ENCODE measurements at regions of chr2 and their contacts with region 1.

Region 1: GRCh38 chr2:17672583-17673317 is 80.9 kb downstream of the SMC6 start:
- DNase-seq: peak; percentile 33
- H3K27ac ChIP-seq: no peak overlapping the region
- CTCF ChIP-seq: no peak

Region 2: GRCh38 chr2:16756831-16757644 is 915.7 kb before region 1 on chr2:
- CTCF ChIA-PET with region 1: no interaction called
- POLR2A ChIA-PET with region 1: no interaction called
- DNase-seq: peak; percentile 70
- H3K27ac ChIP-seq: no peak overlapping the region
- CTCF ChIP-seq: peak; percentile 81

Region 3: GRCh38 chr2:17646081-17646554 is 26.6 kb before region 1 on chr2:
- CTCF ChIA-PET with region 1: interaction called, 15 read pairs
- POLR2A ChIA-PET with region 1: no interaction called
- DNase-seq: peak; percentile 48
- H3K27ac ChIP-seq: no peak overlapping the region
- CTCF ChIP-seq: peak; percentile 92

Measured in RWPE1 (cell line).